Breast epithelium (tissue), 4 donors: ENCODE measurements at regions of chr2 and their contacts with region 1.

Region 1: GRCh38 chr2:66346231-66346664 is 88.7 kb upstream of the MEIS1 start:
- DNase-seq: no peak
- H3K4me3 ChIP-seq: no peak overlapping the region
- H3K27ac ChIP-seq: no peak overlapping the region
- H3K4me1 ChIP-seq: no peaks in the 10 kb centered on the region
- H3K27me3 ChIP-seq: no peaks in the 10 kb centered on the region
- CTCF ChIP-seq: no peak
- POLR2A ChIP-seq: no peak

Region 2: GRCh38 chr2:66555501-66556324 is 209.5 kb after region 1 on chr2:
- intact Hi-C with region 1: loop called (anchors 5 kb)
- DNase-seq: no peak
- H3K4me3 ChIP-seq: peak overlapping the region; percentile 11 to 52 (median 21)
- H3K27ac ChIP-seq: peak overlapping the region; percentile 24 to 27
- H3K4me1 ChIP-seq: no peaks in the 10 kb centered on the region
- H3K27me3 ChIP-seq: no peaks in the 10 kb centered on the region
- CTCF ChIP-seq: no peak
- POLR2A ChIP-seq: no peak